HEK293 (cell line): ENCODE measurements at regions of chr3 and their contacts with region 1.

Region 1: DNA sequence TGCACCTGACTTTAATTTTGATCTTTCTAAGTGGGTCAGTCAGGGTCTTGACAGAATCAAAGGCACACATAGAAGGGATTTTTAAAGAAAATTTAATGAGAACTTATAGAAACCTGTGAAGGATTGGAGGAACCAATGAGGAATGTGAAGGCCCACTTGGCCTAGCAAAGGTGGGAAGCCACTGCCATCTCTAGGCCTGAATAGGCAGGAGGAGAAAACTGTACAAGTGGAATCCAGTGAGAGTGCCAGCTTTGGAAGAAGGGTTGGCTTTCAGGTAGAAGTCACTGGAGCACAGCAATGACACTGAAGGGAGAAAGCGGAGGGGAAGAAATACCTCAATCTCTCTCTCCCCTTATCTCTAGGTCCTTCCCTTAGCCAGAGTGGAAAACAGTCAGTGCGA is 380.7 kb upstream of the KCNMB2 start:
- H3K4me3 ChIP-seq: no peak overlapping the region
- H3K27ac ChIP-seq: no peak overlapping the region
- H3K4me1 ChIP-seq: no peaks in the 10 kb centered on the region
- CTCF ChIP-seq: no peak

Region 2: GRCh38 chr3:177050501-177051237 is 1104.9 kb before region 1 on chr3:
- CTCF ChIA-PET with region 1: interaction called, 11 read pairs
- POLR2A ChIA-PET with region 1: no interaction called
- H3K4me3 ChIP-seq: no peak overlapping the region
- H3K27ac ChIP-seq: no peak overlapping the region
- H3K4me1 ChIP-seq: no peaks in the 10 kb centered on the region
- CTCF ChIP-seq: no peak